ENCODE measurements at regions of chr19 and their contacts with region 1.

Region 1: GRCh38 chr19:18401580-18402112 is 4.2 kb upstream of the LRRC25 start:
- DNase-seq: peak; percentile 76 to 89 (median 84)
- ATAC-seq: peak; percentile 96
- H3K4me3 ChIP-seq: no peak overlapping the region
- H3K4me1 ChIP-seq: peaks cover 18% of the 10 kb centered on the region
- CTCF ChIP-seq: no peak

Region 2: GRCh38 chr19:18340190-18340989 is 61.3 kb before region 1 on chr19 and contains the start of gene PGPEP1:
- intact Hi-C with region 1: loop called (anchors 10 kb)
- DNase-seq: peak; percentile 86 to 89 (median 88)
- ATAC-seq: peak; percentile 91
- H3K4me3 ChIP-seq: peak within 1 kb of the TSS; percentile 65
- H3K4me1 ChIP-seq: peaks cover 15% of the 10 kb centered on the region
- CTCF ChIP-seq: no peak
- total RNA-seq, gene PGPEP1: 77.1 to 97.4 (median 91.5) TPM